PC-3 (cell line): ENCODE measurements at regions of chr11 and their contacts with region 1.

Region 1: GRCh38 chr11:92941676-92942571 is 27.5 kb upstream of the MTNR1B start:
- DNase-seq: peak; percentile 52
- ATAC-seq: no peak
- H3K4me3 ChIP-seq: no peak overlapping the region
- H3K27ac ChIP-seq: no peak overlapping the region
- H3K4me1 ChIP-seq: no peaks in the 10 kb centered on the region
- H3K27me3 ChIP-seq: peaks cover 12% of the 10 kb centered on the region; the same call in 1 of the 2 replicates
- CTCF ChIP-seq: peak; percentile 89

Region 2: DNA sequence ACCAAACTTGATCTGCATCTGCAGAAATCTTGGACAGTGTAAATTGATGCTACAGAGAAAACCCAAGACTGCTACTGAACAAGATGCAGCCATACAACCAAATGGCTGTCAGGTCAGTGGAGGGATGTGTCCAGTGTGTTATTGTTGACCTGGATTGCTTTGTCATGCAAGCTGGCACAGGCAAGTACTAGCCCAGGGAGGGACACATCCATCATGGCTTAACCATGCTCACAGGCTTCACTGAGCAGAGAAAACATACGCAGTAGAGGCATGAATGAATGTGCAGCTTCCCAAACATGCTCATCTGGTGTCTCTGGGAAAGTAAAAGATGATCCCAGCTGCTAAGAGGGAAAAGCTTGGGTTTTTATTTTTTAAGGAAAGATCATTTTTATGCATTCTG is 121.2 kb after region 1 on chr11:
- CTCF ChIA-PET with region 1: no interaction called
- POLR2A ChIA-PET with region 1: no interaction called
- intact Hi-C with region 1: loop called (anchors 10 kb)
- DNase-seq: no peak
- ATAC-seq: no peak
- H3K4me3 ChIP-seq: no peak overlapping the region
- H3K27ac ChIP-seq: no peak overlapping the region
- H3K4me1 ChIP-seq: no peaks in the 10 kb centered on the region
- H3K27me3 ChIP-seq: peaks cover 3% of the 10 kb centered on the region; the same call in 1 of the 2 replicates
- CTCF ChIP-seq: no peak

Region 3: GRCh38 chr11:93169950-93170561 is 228.1 kb after region 1 on chr11:
- CTCF ChIA-PET with region 1: no interaction called
- POLR2A ChIA-PET with region 1: no interaction called
- intact Hi-C with region 1: loop called (anchors 2 kb)
- DNase-seq: peak; percentile 67
- ATAC-seq: peak; percentile 61
- H3K4me3 ChIP-seq: no peak overlapping the region
- H3K27ac ChIP-seq: no peak overlapping the region
- H3K4me1 ChIP-seq: no peaks in the 10 kb centered on the region
- H3K27me3 ChIP-seq: no peaks in the 10 kb centered on the region
- CTCF ChIP-seq: peak; percentile 67

Region 4: DNA sequence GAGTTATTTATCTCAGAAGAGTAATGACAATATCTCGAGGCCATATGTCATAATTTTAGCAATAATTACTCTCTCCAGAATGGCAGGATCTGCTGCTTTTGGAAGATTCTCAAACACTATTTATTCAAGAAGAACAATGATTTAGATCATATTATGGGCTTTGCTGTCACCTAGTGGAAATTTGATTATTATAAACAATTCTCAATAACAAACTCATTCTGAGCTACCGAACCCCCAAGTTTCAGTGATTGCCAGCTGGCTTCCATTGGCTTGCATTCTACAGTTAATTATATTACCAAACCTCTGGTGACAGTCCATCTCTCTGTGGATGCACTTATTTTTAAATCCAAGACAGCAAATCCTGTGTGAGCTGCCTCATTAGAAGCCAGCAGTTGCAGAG is 283.7 kb after region 1 on chr11:
- CTCF ChIA-PET with region 1: interaction called, 7 read pairs
- POLR2A ChIA-PET with region 1: no interaction called
- intact Hi-C with region 1: loop called (anchors 1 kb)
- DNase-seq: peak; percentile 54
- ATAC-seq: no peak; the same call in 1 of the 2 replicates
- H3K4me3 ChIP-seq: no peak overlapping the region
- H3K27ac ChIP-seq: no peak overlapping the region
- H3K4me1 ChIP-seq: no peaks in the 10 kb centered on the region
- H3K27me3 ChIP-seq: peaks cover 19% of the 10 kb centered on the region
- CTCF ChIP-seq: peak; percentile 66